ENCODE measurements at regions of chr18 and their contacts with region 1.

Region 1: GRCh38 chr18:293536-293935 is 25.7 kb upstream of the THOC1 start:
- DNase-seq: no peak
- H3K4me3 ChIP-seq: no peak overlapping the region
- H3K27ac ChIP-seq: no peak overlapping the region
- H3K4me1 ChIP-seq: no peaks in the 10 kb centered on the region
- H3K27me3 ChIP-seq: no peaks in the 10 kb centered on the region
- CTCF ChIP-seq: no peak
- POLR2A ChIP-seq: no peak

Region 2: GRCh38 chr18:457140-457519 is 163.6 kb after region 1 on chr18:
- intact Hi-C with region 1: loop called (anchors 10 kb)
- DNase-seq: no peak
- H3K4me3 ChIP-seq: peak overlapping the region in 2 of 4 donors; percentile 8 to 46
- H3K27ac ChIP-seq: peak overlapping the region in 3 of 4 donors; percentile 43 to 83 (median 80)
- H3K4me1 ChIP-seq: peaks cover 0 to 22% (median 4%) of the 10 kb centered on the region in 3 donors
- H3K27me3 ChIP-seq: peaks cover 0 to 6% (median 0%) of the 10 kb centered on the region in 4 donors
- CTCF ChIP-seq: no peak
- POLR2A ChIP-seq: no peak

Measured in esophagus squamous epithelium (tissue), 5 donors.